Activated B cell treated with CpG ODN at 0.5 μM for 24 hours (primary cell): ENCODE measurements at regions of chr20 and their contacts with region 1.

Region 1: DNA sequence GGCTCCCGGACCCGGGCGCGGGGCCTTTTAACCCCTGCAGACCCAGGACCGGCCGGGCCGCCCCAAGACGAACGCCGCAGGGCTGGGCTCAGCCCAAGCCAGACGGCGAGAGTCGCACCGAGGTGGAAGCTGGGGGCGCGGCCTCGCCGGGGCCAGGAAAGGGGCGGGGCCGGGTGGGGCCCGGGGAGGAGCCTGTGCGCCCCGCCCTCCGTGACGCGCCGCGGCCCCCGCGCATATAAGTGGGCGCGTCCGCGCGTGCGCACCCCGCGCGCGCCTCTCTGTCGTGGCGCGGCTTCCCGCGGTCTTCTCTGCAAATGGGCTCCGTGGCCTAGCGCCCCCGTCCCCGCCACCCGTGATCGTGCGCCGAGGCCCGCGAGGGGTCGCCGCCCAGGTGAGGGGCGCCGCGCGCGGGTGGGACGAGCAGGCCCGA is at the start of gene PPDPF:
- DNase-seq: peak; percentile 84
- ATAC-seq: peak; percentile 81
- H3K4me3 Mint-ChIP-seq: peak within 1 kb of the TSS; percentile 81
- H3K27ac Mint-ChIP-seq: peak within 1 kb of the TSS; percentile 61
- H3K4me1 Mint-ChIP-seq: peaks cover 33% of the 10 kb centered on the region
- H3K27me3 Mint-ChIP-seq: no peaks in the 10 kb centered on the region
- CTCF ChIP-seq: no peak
- total RNA-seq, gene PPDPF: 170 and 172 TPM in 2 replicates

Region 2: DNA sequence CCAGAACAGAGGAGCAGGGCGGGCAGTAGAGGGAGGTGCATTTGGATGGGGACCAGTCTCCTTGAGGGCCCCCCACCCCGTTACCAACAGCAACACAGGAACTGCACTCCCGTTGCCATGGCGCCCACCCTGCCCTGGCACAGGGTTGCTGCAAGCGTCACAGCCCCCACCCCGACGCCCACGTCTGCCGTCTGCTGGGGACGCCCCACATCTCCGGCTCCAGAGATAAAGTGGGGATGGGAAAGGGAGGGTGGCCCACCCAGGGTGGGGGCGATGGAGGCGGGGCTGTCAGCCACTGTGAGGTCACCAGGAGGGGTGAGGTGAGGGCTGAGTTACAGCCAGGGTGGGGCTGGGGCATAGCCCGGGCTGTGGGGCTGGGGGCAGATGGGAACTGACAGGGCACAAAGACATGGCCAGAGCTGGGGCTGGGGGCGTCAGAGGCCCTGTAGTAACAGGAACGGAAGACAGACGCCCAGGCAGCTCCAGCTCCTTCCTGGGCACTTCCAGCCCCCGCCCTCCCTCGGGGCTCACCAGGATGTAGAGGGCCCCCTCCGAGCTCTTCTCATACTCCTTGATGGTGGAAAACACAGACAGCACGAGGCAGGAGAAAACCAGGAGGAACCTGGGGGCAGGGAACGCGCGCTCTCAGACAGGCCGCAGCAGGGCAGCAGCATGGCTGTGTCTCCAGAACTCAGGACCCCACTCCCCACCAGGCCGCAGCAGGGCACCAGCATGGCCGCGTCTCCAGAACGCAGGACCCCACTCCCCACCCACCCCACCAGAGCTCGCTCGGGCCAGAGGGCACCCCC is 74.1 kb before region 1 on chr20:
- CTCF ChIA-PET with region 1: no interaction called
- POLR2A ChIA-PET with region 1: no interaction called
- intact Hi-C with region 1: no loop called
- DNase-seq: no peak
- ATAC-seq: no peak
- H3K4me3 Mint-ChIP-seq: no peak overlapping the region
- H3K27ac Mint-ChIP-seq: no peak overlapping the region
- H3K4me1 Mint-ChIP-seq: peaks cover 13% of the 10 kb centered on the region
- H3K27me3 Mint-ChIP-seq: peaks cover 12% of the 10 kb centered on the region
- CTCF ChIP-seq: no peak

Region 3: DNA sequence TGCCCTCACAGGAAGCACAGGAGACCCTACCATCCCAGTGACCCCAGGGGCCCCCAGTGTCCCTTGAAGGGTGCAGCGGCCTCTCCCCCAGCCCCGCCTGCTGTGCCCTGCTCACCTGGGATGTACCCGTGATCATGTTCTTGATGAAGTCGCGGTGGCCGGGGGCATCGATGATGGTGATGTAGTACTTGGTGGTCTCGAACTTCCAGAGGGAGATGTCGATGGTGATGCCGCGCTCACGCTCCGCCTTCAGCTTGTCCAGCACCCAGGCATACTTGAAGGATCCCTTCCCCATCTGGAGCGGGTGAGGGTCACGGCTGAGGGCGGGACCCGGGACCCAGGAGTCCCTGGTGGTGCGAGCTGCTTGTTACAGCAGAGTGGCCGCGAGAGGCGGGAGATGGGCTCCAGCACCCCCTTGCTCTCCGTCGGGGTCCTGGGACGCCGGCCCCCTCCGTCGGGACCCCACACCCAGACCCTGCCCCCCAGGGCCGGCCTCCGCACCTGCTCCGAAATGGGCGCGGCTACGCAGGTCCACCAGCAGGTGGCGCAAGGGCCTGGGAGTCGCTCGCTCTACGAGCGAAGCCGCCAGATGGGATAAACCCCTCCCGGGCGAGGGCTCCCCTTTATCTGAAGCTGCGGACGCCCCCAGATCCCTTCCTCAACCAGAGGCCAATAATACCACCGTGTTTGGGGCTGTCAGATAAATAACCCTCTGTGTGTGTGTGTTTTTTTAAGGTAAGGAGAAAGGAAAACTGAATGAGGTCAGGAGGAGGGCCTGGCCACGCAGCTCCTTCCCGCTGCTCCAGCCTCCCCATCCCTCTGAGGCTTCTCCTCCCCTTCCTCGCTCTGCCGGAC is 24.6 kb before region 1 on chr20:
- CTCF ChIA-PET with region 1: interaction called, 4 read pairs
- POLR2A ChIA-PET with region 1: interaction called, 21 read pairs
- intact Hi-C with region 1: loop called (anchors 1 kb)
- DNase-seq: peak; percentile 73
- ATAC-seq: peak; percentile 74
- H3K4me3 Mint-ChIP-seq: peak overlapping the region; percentile 59
- H3K27ac Mint-ChIP-seq: no peak overlapping the region
- H3K4me1 Mint-ChIP-seq: peaks cover 4% of the 10 kb centered on the region
- H3K27me3 Mint-ChIP-seq: peaks cover 9% of the 10 kb centered on the region
- CTCF ChIP-seq: peak; percentile 58

Region 4: GRCh38 chr20:63567386-63568169 is 47.1 kb after region 1 on chr20:
- CTCF ChIA-PET with region 1: no interaction called
- POLR2A ChIA-PET with region 1: interaction called, 11 read pairs
- intact Hi-C with region 1: no loop called
- DNase-seq: peak; percentile 62
- ATAC-seq: peak; percentile 76
- H3K4me3 Mint-ChIP-seq: peak overlapping the region; percentile 68
- H3K27ac Mint-ChIP-seq: peak overlapping the region; percentile 75
- H3K4me1 Mint-ChIP-seq: peaks cover 31% of the 10 kb centered on the region
- H3K27me3 Mint-ChIP-seq: no peaks in the 10 kb centered on the region
- CTCF ChIP-seq: no peak

Region 5: DNA sequence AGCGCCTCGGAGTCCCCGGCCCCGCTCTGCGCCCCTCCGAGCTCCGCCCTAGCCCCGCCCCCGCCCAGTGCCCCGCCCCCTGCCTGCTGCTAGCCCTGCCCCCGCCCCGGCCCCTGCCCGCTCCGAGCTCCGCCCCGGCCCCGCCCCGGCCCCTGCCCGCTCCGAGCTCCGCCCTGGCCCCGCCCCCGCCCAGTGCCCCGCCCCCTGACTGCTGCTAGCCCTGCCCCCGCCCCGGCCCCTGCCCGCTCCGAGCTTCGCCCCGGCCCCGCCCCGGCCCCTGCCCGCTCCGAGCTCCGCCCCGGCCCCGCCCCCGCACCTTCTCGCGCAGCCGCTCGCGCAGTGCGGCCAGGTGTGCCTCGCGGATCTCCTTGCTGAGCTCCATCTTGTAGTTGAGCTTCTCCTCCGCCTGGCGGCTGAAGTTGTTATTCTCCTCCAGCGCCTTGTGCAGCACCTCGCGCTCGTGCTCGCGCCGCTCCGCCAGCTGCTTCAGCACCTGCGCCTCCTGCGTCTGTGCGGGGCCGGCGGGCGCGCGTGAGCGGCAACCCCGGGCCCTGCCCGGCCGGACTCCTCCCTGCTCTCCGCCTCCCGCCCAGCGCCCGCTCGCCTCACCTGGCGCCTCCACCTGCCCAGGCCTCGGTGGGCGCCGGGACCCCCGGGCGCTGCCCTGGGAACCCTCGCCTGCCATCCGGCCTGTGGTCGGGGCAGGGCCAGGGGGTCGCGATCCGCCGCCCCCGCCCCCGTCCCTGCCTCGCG is 121.4 kb after region 1 on chr20:
- CTCF ChIA-PET with region 1: no interaction called
- POLR2A ChIA-PET with region 1: interaction called, 18 read pairs
- intact Hi-C with region 1: no loop called
- DNase-seq: peak; percentile 92
- ATAC-seq: peak; percentile 76
- H3K4me3 Mint-ChIP-seq: peak overlapping the region; percentile 78
- H3K27ac Mint-ChIP-seq: peak overlapping the region; percentile 71
- H3K4me1 Mint-ChIP-seq: peaks cover 35% of the 10 kb centered on the region
- H3K27me3 Mint-ChIP-seq: no peaks in the 10 kb centered on the region
- CTCF ChIP-seq: no peak

Region 6: DNA sequence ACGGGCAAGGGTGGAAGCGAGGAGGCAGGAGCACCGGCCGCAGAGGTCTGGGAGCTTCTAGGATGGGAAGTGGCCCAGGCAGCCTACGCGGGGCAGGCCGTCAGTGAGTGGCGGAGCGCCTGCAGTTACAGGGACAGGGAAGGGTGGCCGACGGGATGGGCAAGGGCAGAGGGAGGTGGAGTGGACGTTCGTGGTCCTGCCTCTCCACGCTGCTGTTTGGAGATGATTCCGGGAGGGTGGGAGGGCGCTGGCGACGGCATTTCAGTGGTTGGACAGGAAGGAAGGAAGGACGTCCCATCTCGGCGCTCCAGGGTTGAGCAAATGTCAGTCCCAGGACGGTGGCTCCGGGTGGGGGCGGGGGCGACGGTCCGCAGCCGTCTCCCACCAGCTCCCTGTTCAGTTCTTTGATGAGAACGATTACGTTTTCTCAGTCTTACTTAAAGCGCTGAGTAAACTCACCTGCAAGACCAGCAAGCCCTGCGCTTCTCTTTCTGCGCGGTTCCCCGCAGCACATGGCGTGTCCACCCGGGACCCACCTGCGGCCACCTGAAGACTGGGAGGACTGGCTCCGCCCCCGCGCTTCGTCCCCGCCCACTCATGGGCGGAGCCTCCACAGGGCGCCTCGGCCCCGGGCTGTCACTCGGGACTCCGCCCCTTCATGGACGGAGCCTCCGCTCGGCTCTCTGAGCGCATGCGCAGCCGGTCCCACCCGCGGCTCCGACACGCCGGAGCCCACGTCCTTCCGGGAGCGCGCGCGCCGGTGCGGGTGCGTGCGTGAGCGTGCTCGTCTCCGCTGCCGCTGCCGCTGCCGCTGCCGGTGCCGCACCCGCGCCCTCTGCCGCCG is 374.1 kb after region 1 on chr20 and contains the start of gene DNAJC5:
- CTCF ChIA-PET with region 1: no interaction called
- POLR2A ChIA-PET with region 1: interaction called, 4 read pairs
- intact Hi-C with region 1: loop called (anchors 1 kb)
- DNase-seq: peak; percentile 97
- ATAC-seq: peak; percentile 92
- H3K4me3 Mint-ChIP-seq: peak within 1 kb of the TSS; percentile 88
- H3K27ac Mint-ChIP-seq: peak within 1 kb of the TSS; percentile 90
- H3K4me1 Mint-ChIP-seq: peaks cover 45% of the 10 kb centered on the region
- H3K27me3 Mint-ChIP-seq: no peaks in the 10 kb centered on the region
- CTCF ChIP-seq: no peak
- total RNA-seq, gene DNAJC5: 27.5 and 28.6 TPM in 2 replicates

Region 7: GRCh38 chr20:63973636-63974402 is 453.3 kb after region 1 on chr20:
- CTCF ChIA-PET with region 1: no interaction called
- POLR2A ChIA-PET with region 1: interaction called, 10 read pairs
- intact Hi-C with region 1: loop called (anchors 1 kb)
- DNase-seq: peak; percentile 87
- ATAC-seq: peak; percentile 66
- H3K4me3 Mint-ChIP-seq: peak overlapping the region; percentile 8
- H3K27ac Mint-ChIP-seq: no peak overlapping the region
- H3K4me1 Mint-ChIP-seq: peaks cover 28% of the 10 kb centered on the region
- H3K27me3 Mint-ChIP-seq: no peaks in the 10 kb centered on the region
- CTCF ChIP-seq: peak; percentile 72

Region 8: DNA sequence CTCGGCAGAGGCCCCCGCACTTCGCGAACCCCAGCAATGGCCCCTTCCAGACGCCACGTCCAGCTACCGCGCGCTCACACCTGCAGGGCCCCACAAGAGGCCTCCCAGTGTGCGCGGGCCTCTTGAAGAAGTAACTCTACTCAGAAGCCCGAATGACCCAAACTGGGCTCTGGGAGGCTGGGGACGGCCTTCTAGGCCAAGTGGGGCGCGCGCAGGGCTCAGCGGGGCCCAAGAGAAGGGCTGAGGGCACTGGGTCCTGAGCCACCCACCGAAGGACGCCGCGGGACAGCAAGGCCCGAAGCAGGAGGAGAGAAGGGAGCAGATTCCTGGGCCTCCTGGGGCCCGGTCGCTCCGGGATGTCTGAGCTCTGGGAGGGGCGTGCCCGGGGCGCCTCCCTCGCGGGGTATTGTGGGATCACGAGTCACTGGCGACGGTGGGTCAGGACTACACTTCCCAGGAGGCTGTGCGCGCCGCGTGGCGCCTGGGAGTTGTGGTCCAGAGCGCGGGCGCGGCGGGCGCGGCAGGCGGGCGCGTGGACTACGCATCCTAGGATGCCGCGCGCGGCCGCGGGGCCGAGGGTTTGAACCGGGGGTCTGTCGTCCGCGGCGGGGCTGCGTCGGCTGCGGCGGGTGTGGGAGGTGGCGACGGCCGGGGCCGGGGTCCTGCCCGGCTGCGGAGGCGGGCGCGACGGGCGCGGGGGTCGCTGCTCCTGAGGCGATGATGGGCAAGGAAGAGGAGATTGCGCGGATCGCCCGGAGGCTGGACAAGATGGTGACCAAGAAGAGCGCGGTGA is 542.3 kb after region 1 on chr20 and contains the start of gene TCEA2:
- CTCF ChIA-PET with region 1: no interaction called
- POLR2A ChIA-PET with region 1: interaction called, 7 read pairs
- intact Hi-C with region 1: loop called (anchors 5 kb)
- DNase-seq: peak; percentile 94
- ATAC-seq: peak; percentile 84
- H3K4me3 Mint-ChIP-seq: peak within 1 kb of the TSS; percentile 88
- H3K27ac Mint-ChIP-seq: peak within 1 kb of the TSS; percentile 67
- H3K4me1 Mint-ChIP-seq: peaks cover 51% of the 10 kb centered on the region
- H3K27me3 Mint-ChIP-seq: no peaks in the 10 kb centered on the region
- CTCF ChIP-seq: no peak
- total RNA-seq, gene TCEA2: 20.3 and 20.7 TPM in 2 replicates